IMR-90 (cell line): ENCODE measurements at regions of chr3 and their contacts with region 1.

Region 1: GRCh38 chr3:66983101-66983500 is 15.0 kb upstream of the KBTBD8 start:
- DNase-seq: no peak
- ATAC-seq: no peak
- H3K4me3 ChIP-seq: no peak overlapping the region
- H3K27ac ChIP-seq: no peak overlapping the region
- H3K4me1 ChIP-seq: no peaks in the 10 kb centered on the region
- H3K27me3 ChIP-seq: peaks cover 16% of the 10 kb centered on the region
- CTCF ChIP-seq: no peak
- POLR2A ChIP-seq: no peak
- RAD21 ChIP-seq: no peak

Region 2: DNA sequence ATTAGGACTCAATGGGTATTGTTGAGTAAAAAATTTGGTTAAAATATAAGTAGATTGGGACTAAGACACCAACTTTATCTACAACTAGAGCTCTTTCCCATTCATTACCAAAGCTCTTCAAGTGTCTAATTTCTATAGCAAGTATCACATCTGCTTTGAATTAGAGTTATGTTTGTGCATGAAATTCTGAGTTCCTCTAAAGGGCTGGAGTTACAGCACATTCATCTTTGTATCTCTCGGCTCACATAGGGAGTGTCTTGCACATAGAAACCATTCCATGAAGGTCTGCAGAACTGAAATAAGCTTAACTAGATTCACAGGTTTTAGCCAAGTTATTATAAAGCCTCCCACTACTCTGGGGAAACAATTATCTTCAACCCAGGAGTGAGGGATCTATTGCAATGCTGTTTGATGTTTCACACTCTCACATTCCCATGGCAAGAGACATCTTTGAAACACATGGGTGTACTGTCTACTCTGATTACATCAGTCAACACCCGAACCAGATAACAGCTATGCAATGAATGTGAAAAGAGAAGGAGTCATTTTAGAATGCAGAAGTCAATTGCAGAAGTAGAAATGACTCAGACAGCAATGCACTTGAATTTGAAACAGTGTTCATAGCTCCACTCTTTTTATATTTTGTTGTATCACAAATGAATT is 78.1 kb before region 1 on chr3:
- CTCF ChIA-PET with region 1: no interaction called
- POLR2A ChIA-PET with region 1: interaction called, 24 read pairs
- dilution Hi-C with region 1: no loop called
- in situ Hi-C with region 1: no loop called
- intact Hi-C with region 1: no loop called
- DNase-seq: peak; percentile 1
- ATAC-seq: no peak
- H3K4me3 ChIP-seq: no peak overlapping the region
- H3K27ac ChIP-seq: no peak overlapping the region
- H3K4me1 ChIP-seq: no peaks in the 10 kb centered on the region
- H3K27me3 ChIP-seq: peaks cover 4% of the 10 kb centered on the region
- CTCF ChIP-seq: no peak
- POLR2A ChIP-seq: no peak
- RAD21 ChIP-seq: no peak

Region 3: DNA sequence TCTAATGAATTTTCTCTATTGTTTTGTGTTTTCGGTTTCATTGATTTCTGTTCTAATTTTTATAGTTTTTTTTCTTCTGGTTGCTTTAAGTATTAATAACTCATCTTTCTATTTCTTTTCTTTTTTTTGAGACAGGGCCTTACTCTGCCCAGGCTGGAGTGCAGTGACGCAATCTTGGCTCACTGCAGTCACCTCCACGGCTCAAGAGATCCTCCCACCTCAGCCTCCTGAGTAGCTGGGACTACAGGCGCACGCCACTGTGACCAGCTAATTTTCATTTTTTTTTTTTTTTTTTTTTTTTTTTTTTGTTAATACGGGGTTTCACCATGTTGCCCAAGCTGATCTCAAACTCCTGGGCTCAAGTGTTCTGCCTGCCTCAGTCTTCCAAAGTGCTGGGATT is 29.5 kb after region 1 on chr3:
- CTCF ChIA-PET with region 1: no interaction called
- POLR2A ChIA-PET with region 1: no interaction called
- dilution Hi-C with region 1: no loop called
- in situ Hi-C with region 1: no loop called
- intact Hi-C with region 1: no loop called
- DNase-seq: no peak
- ATAC-seq: no peak
- H3K4me3 ChIP-seq: no peak overlapping the region
- H3K27ac ChIP-seq: no peak overlapping the region
- H3K4me1 ChIP-seq: peaks cover 5% of the 10 kb centered on the region; the same call in 1 of the 2 replicates
- H3K27me3 ChIP-seq: no peaks in the 10 kb centered on the region
- CTCF ChIP-seq: no peak
- POLR2A ChIP-seq: no peak
- RAD21 ChIP-seq: no peak

Region 4: GRCh38 chr3:67048067-67048714 is 65.1 kb after region 1 on chr3:
- CTCF ChIA-PET with region 1: no interaction called
- POLR2A ChIA-PET with region 1: no interaction called
- dilution Hi-C with region 1: no loop called
- in situ Hi-C with region 1: no loop called
- intact Hi-C with region 1: no loop called
- DNase-seq: no peak
- ATAC-seq: no peak
- H3K4me3 ChIP-seq: no peak overlapping the region
- H3K27ac ChIP-seq: no peak overlapping the region
- H3K4me1 ChIP-seq: peaks cover 4% of the 10 kb centered on the region
- H3K27me3 ChIP-seq: no peaks in the 10 kb centered on the region; the same call in none of the 2 replicates
- CTCF ChIP-seq: no peak
- POLR2A ChIP-seq: no peak
- RAD21 ChIP-seq: no peak

Region 5: GRCh38 chr3:68151359-68151758 is 1168.3 kb after region 1 on chr3:
- CTCF ChIA-PET with region 1: no interaction called
- POLR2A ChIA-PET with region 1: no interaction called
- dilution Hi-C with region 1: no loop called
- in situ Hi-C with region 1: no loop called
- intact Hi-C with region 1: no loop called
- DNase-seq: no peak
- ATAC-seq: no peak
- H3K4me3 ChIP-seq: no peak overlapping the region
- H3K27ac ChIP-seq: no peak overlapping the region
- H3K4me1 ChIP-seq: no peaks in the 10 kb centered on the region
- H3K27me3 ChIP-seq: no peaks in the 10 kb centered on the region
- CTCF ChIP-seq: no peak
- POLR2A ChIP-seq: no peak
- RAD21 ChIP-seq: no peak